HepG2 (cell line): ENCODE measurements at regions of chr6 and their contacts with region 1.

Region 1: DNA sequence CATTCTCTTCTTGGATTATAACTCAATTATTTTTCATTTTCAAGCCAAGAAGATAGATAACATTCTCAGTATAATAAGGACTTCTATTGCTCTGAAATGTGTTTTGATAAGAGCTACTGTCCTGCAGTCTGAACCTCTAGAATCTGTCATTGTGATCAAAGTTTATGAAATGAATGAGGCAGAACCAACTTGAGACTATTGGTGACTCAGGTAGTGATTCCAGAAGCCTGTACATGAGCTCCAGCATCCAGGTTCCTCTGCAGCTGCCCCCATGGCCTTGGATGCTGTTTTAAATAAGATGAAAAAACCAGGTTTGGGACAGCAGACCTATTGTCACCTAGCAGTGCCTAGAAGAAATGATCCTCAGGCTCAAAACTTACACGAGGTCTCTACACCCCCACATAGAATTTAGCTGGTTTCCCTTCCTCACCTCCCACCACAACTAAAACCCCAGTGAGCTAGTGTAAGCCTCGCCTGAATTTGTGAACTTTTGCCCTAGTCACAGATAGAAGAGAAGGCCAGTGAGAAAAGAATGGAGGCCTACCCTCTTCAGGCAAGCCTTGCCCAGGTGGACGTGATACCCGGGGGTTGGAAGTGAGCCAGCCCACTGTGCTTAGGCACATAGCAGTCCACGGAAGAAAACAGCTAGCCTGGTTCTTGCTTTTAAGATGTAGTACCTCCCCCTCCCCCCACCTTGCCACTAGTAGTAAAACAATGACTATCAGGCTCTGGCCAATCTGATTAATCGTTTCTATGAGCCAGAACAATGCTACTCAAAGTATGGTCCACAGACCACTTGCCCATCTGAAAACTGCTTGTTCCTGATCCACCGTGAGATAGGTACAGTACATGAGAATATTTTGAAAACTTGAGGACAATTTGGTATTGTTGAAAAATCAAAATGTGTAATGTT is 73.0 kb upstream of the SYNJ2 start:
- DNase-seq: no peak
- ATAC-seq: no peak
- H3K4me3 ChIP-seq: no peak overlapping the region
- H3K27ac ChIP-seq: no peak overlapping the region
- H3K4me1 ChIP-seq: no peaks in the 10 kb centered on the region
- H3K27me3 ChIP-seq: no peaks in the 10 kb centered on the region
- CTCF ChIP-seq: no peak
- EP300 ChIP-seq: no peak
- POLR2A ChIP-seq: no peak
- RAD21 ChIP-seq: no peak

Region 2: DNA sequence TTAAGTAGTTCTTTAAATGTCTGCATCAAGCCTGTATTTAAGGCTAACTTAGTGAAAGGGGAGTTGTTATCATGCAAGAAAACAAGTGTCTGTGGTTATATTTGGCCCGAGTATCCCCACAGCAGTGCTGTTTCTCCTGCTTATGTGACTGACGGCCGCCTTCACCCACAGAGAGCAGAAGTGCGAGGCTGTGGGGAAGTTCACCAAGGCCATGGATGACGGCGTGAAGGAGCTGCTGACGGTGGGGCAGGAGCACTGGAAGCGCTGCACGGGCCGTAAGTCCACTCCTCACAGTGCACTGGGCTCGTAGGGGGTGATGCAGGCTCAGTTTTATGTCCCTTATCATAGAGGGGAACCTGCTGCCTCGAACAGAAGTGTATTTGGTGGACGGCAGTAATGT is 19.8 kb after region 1 on chr6:
- CTCF ChIA-PET with region 1: no interaction called
- POLR2A ChIA-PET with region 1: no interaction called
- in situ Hi-C with region 1: no loop called
- intact Hi-C with region 1: loop called (anchors 1 kb)
- DNase-seq: no peak
- ATAC-seq: no peak
- H3K4me3 ChIP-seq: no peak overlapping the region
- H3K27ac ChIP-seq: no peak overlapping the region
- H3K4me1 ChIP-seq: no peaks in the 10 kb centered on the region
- H3K27me3 ChIP-seq: no peaks in the 10 kb centered on the region
- CTCF ChIP-seq: no peak
- EP300 ChIP-seq: no peak
- POLR2A ChIP-seq: no peak
- RAD21 ChIP-seq: no peak